OCI-LY7 (cell line): ENCODE measurements at regions of chr12 and their contacts with region 1.

Region 1: DNA sequence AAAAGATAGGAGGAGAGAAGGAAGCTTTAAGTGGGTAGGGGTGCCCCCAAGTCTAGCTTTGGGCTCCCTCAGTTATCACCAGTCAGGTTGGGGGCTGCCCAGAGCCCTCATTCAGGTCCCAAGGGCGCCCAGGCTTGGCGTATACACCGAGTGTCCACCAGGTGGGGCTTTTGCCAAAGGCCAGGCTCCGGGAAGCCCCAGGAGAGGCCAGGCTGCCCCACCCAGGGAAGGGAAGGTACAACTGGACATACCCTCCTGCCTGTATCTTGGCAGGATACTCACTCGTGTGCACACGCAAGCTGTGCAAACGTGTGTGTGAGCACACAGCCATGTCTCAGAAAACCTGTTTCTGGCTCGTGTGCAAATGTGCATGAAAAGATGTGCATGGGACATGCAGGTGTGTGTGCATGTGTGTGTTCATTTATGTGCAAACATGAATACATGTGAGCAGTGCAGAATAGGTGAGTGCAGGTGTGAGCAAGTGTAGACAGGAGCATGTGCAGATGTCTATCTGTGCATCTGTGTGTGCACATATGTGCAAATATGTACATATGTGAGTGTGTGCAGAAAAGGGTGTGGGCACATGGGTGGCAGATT is 103.9 kb upstream of the MYL2 start:
- DNase-seq: peak; percentile 74
- H3K4me3 ChIP-seq: no peak overlapping the region
- H3K27ac ChIP-seq: no peak overlapping the region
- H3K4me1 ChIP-seq: no peaks in the 10 kb centered on the region
- CTCF ChIP-seq: peak; percentile 95

Region 2: GRCh38 chr12:110742096-110742717 is 282.1 kb before region 1 on chr12:
- CTCF ChIA-PET with region 1: no interaction called
- POLR2A ChIA-PET with region 1: no interaction called
- intact Hi-C with region 1: no loop called
- DNase-seq: no peak
- H3K4me3 ChIP-seq: peak overlapping the region; percentile 86
- H3K27ac ChIP-seq: peak overlapping the region; percentile 62
- H3K4me1 ChIP-seq: peaks cover 46% of the 10 kb centered on the region
- CTCF ChIP-seq: no peak

Region 3: DNA sequence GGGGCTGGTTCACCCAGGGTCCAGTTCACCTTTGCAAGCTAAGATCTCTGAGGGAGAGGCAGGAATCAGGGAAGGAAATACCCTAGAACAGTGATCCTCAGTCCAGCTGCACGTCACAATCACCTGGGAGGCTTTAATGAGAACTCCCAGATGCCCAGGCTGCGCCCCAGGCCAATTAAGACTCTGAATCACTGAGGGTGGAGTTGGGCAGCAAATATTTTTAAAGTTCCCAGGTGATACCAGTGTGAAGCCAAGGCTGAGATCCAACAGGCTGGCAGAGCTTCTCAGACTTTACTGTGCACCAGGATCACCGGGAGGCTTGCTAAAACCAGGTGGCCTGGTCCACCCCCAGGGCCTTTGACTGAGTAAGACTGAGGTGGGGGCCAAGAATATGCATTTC is 127.7 kb before region 1 on chr12:
- CTCF ChIA-PET with region 1: interaction called, 3 read pairs
- POLR2A ChIA-PET with region 1: no interaction called
- intact Hi-C with region 1: loop called (anchors 2 kb)
- DNase-seq: no peak
- H3K4me3 ChIP-seq: no peak overlapping the region
- H3K27ac ChIP-seq: no peak overlapping the region
- H3K4me1 ChIP-seq: no peaks in the 10 kb centered on the region
- CTCF ChIP-seq: no peak

Region 4: GRCh38 chr12:110906985-110907384 is 117.3 kb before region 1 on chr12:
- CTCF ChIA-PET with region 1: no interaction called
- POLR2A ChIA-PET with region 1: no interaction called
- intact Hi-C with region 1: no loop called
- DNase-seq: no peak
- H3K4me3 ChIP-seq: no peak overlapping the region
- H3K27ac ChIP-seq: peak overlapping the region; percentile 67
- H3K4me1 ChIP-seq: peaks cover 34% of the 10 kb centered on the region
- CTCF ChIP-seq: no peak

Region 5: GRCh38 chr12:111093428-111094142 is 69.3 kb after region 1 on chr12:
- CTCF ChIA-PET with region 1: no interaction called
- POLR2A ChIA-PET with region 1: no interaction called
- intact Hi-C with region 1: loop called (anchors 5 kb)
- DNase-seq: peak; percentile 70
- H3K4me3 ChIP-seq: peak overlapping the region; percentile 42
- H3K27ac ChIP-seq: peak overlapping the region; percentile 82
- H3K4me1 ChIP-seq: peaks cover 89% of the 10 kb centered on the region
- CTCF ChIP-seq: no peak

Region 6: GRCh38 chr12:111174251-111174960 is 150.1 kb after region 1 on chr12:
- CTCF ChIA-PET with region 1: no interaction called
- POLR2A ChIA-PET with region 1: no interaction called
- intact Hi-C with region 1: loop called (anchors 1 kb)
- DNase-seq: peak; percentile 38
- H3K4me3 ChIP-seq: no peak overlapping the region
- H3K27ac ChIP-seq: no peak overlapping the region
- H3K4me1 ChIP-seq: peaks cover 8% of the 10 kb centered on the region
- CTCF ChIP-seq: peak; percentile 74

Region 7: GRCh38 chr12:111298582-111299436 is 274.5 kb after region 1 on chr12:
- CTCF ChIA-PET with region 1: no interaction called
- POLR2A ChIA-PET with region 1: no interaction called
- intact Hi-C with region 1: loop called (anchors 1 kb)
- DNase-seq: peak; percentile 62
- H3K4me3 ChIP-seq: no peak overlapping the region
- H3K27ac ChIP-seq: no peak overlapping the region
- H3K4me1 ChIP-seq: no peaks in the 10 kb centered on the region
- CTCF ChIP-seq: peak; percentile 89